ENCODE measurements at regions of chr16 and their contacts with region 1.

Region 1: DNA sequence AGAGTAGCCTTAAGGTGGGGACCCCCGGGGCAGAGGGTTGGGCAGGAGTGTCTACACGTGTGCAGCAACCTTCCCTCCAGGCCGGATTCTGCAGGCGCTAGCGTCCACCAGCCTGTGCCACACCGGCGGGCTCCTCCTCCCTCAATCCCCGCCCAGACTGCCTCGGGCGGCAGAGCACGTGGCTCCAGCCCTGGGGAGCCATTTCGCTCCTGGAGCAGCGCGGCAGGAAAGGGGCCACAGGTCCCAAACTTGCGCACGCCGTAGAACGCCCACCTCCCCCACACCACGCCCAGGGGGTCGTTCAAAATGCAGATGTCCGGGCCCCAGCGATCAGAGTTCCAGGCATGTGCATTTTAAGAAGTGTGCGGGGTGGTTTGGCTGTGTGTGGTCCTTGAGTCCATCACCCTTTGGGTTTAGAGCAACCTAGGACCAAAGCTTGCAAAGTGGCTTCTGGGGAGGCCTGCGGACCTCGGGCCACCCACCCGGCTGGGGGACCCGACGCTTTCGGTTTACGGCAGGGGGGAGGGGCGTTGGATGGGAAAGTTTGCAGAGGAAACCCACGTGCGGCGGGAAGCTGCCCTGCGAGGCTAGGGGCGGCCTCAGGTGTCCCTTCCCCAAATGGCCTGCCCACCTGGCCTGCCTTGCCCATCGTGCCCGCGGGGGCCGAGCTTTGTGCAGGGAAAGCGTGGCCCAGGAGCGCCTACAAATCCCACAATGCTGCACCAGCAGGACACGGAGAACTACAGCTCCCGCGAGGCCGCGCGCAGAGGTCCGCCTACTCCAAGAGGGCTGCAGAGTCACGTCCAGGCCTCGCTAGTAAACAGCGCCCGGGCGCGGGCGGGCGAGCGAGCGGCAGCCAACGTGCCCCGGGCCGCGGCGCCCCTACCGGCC is 1.4 kb downstream of the TFAP4 start:
- DNase-seq: peak; percentile 96
- ATAC-seq: peak; percentile 85
- H3K4me3 Mint-ChIP-seq: peak overlapping the region; percentile 84
- H3K27ac Mint-ChIP-seq: peak overlapping the region; percentile 94
- H3K4me1 Mint-ChIP-seq: peaks cover 12% of the 10 kb centered on the region
- H3K27me3 Mint-ChIP-seq: no peaks in the 10 kb centered on the region

Region 2: GRCh38 chr16:3717235-3718018 is 554.0 kb before region 1 on chr16 and contains the start of gene TRAP1:
- CTCF ChIA-PET with region 1: no interaction called
- POLR2A ChIA-PET with region 1: no interaction called
- intact Hi-C with region 1: loop called in 1 of 2 experiments (anchors 1 kb)
- DNase-seq: peak; percentile 95
- ATAC-seq: peak; percentile 95
- H3K4me3 Mint-ChIP-seq: peak within 1 kb of the TSS; percentile 89
- H3K27ac Mint-ChIP-seq: peak within 1 kb of the TSS; percentile 92
- H3K4me1 Mint-ChIP-seq: peaks cover 44% of the 10 kb centered on the region
- H3K27me3 Mint-ChIP-seq: no peaks in the 10 kb centered on the region
- total RNA-seq, gene TRAP1: 306 to 360 TPM

Region 3: DNA sequence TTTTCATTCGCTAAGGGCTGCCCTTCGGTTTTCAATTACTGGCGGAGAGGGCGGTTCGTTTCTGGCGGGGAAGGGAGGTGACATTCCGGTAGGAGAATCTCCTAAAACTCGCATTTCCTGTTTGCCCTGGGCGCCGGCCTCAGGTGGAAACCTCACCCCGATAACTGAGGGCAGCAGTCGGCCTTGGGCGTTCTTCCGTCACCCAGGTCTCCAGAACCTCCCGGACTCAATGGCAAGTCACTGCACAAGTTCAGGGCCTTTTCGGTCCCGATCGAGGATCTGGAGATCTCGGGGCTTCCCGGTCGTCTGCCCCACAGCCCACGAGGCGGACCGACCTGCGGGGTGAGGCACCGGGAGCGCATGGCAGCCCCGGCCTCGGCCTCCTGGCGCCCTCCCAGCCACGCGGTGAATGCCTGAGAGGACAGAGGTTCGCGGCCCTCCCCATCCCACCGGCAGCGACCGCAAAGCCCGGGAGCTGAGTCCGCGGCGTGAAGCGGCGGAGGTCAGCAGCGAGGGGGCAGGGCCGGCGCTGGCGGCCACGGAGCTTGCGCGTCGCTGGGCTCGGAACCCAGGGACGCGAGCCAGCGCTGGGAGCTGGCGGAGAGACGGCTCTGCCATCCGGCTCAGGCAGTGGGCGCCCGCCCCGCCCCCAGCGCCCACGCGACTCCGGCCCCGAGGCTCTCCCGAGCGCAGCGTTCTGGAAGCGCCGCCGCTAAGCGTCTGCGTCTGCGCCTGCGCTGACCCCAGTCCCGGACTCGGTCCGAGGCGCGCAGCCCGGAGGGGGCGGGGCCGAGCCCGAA is 88.0 kb before region 1 on chr16:
- CTCF ChIA-PET with region 1: no interaction called
- POLR2A ChIA-PET with region 1: no interaction called
- intact Hi-C with region 1: loop called in 1 of 2 experiments (anchors 1 kb)
- DNase-seq: peak; percentile 94
- ATAC-seq: peak; percentile 95
- H3K4me3 Mint-ChIP-seq: peak overlapping the region; percentile 76
- H3K27ac Mint-ChIP-seq: peak overlapping the region; percentile 47
- H3K4me1 Mint-ChIP-seq: peaks cover 6% of the 10 kb centered on the region
- H3K27me3 Mint-ChIP-seq: no peaks in the 10 kb centered on the region

Region 4: GRCh38 chr16:4244254-4245076 is 27.0 kb before region 1 on chr16:
- CTCF ChIA-PET with region 1: no interaction called
- POLR2A ChIA-PET with region 1: no interaction called
- intact Hi-C with region 1: no loop called
- DNase-seq: no peak
- ATAC-seq: no peak
- H3K4me3 Mint-ChIP-seq: no peak overlapping the region
- H3K27ac Mint-ChIP-seq: no peak overlapping the region
- H3K4me1 Mint-ChIP-seq: no peaks in the 10 kb centered on the region
- H3K27me3 Mint-ChIP-seq: no peaks in the 10 kb centered on the region

Region 5: GRCh38 chr16:4350787-4351659 is 79.6 kb after region 1 on chr16 and contains the start of gene PAM16:
- CTCF ChIA-PET with region 1: interaction called, 3 read pairs
- POLR2A ChIA-PET with region 1: interaction called, 4 read pairs
- intact Hi-C with region 1: loop called (anchors 1 kb)
- DNase-seq: peak; percentile 99
- ATAC-seq: peak; percentile 96
- H3K4me3 Mint-ChIP-seq: peak within 1 kb of the TSS; percentile 89
- H3K27ac Mint-ChIP-seq: peak within 1 kb of the TSS; percentile 88
- H3K4me1 Mint-ChIP-seq: peaks cover 20% of the 10 kb centered on the region
- H3K27me3 Mint-ChIP-seq: no peaks in the 10 kb centered on the region
- total RNA-seq, gene PAM16: 62.8 to 67.8 TPM

Region 6: DNA sequence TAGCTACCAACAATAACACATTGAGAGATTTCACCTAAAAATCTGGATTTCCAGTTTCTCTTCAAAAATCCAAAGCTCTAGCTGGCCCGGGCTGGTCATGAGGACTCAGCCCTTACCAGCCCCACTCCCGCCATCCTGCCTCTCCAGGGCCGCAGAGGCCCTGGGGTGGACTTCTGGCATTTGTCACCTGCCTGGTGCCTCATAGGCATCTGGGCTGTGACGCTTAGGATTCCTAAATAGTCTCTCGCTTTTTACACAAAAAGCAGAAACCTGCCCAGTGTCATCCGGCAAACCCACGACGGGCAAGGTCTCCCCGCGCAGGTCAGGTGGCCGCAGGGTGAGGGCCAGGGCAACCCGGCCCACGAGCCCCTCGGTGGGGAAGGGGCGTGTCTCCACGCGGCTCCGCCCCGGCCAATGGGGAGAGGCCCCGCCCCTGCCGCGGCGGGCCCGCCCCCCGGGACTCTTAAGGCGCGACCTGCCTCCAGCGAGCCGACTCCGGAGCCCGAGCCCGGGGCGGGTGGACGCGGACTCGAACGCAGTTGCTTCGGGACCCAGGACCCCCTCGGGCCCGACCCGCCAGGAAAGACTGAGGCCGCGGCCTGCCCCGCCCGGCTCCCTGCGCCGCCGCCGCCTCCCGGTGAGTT is 100.1 kb after region 1 on chr16 and contains the start of gene VASN:
- CTCF ChIA-PET with region 1: no interaction called
- POLR2A ChIA-PET with region 1: no interaction called
- intact Hi-C with region 1: no loop called
- DNase-seq: peak; percentile 81
- ATAC-seq: peak; percentile 94
- H3K4me3 Mint-ChIP-seq: peak within 1 kb of the TSS; percentile 59
- H3K27ac Mint-ChIP-seq: no peak within 1 kb of the TSS
- H3K4me1 Mint-ChIP-seq: peaks cover 12% of the 10 kb centered on the region
- H3K27me3 Mint-ChIP-seq: no peaks in the 10 kb centered on the region
- total RNA-seq, gene VASN: not detected

Region 7: DNA sequence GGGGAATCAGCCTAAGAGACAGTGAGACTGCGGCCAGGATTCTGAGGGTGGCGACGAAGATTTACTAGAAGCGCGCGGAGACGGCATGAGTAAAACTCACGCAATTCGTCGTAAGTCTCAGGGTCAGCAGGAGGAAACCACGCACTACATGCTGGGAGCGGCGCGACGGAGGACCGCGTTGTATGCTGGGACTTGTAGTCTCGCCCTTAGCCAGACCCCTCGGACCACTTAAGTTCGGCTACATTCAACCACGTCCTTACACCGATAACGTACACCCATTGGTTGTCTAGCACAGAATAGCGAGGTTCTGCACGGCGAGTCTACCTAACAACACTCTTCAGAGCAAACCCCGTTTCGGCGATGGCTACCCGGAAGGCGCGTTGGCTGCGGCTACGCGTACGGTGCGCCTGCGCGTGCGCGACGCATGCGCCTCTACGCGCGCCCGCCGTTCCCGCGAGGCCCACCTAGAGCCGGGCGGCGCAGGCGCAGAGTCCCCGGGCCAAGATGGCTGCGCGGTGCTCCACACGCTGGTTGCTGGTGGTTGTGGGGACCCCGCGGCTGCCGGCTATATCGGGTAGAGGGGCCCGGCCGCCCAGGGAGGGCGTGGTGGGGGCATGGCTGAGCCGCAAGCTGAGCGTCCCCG is 154.1 kb after region 1 on chr16 and contains the start of gene DNAJA3:
- CTCF ChIA-PET with region 1: no interaction called
- POLR2A ChIA-PET with region 1: no interaction called
- intact Hi-C with region 1: loop called in 1 of 2 experiments (anchors 1 kb)
- DNase-seq: peak; percentile 96
- ATAC-seq: peak; percentile 93
- H3K4me3 Mint-ChIP-seq: peak within 1 kb of the TSS; percentile 95
- H3K27ac Mint-ChIP-seq: peak within 1 kb of the TSS; percentile 98
- H3K4me1 Mint-ChIP-seq: peaks cover 27% of the 10 kb centered on the region
- H3K27me3 Mint-ChIP-seq: no peaks in the 10 kb centered on the region
- total RNA-seq, gene DNAJA3: 93.9 to 102 TPM

Region 8: DNA sequence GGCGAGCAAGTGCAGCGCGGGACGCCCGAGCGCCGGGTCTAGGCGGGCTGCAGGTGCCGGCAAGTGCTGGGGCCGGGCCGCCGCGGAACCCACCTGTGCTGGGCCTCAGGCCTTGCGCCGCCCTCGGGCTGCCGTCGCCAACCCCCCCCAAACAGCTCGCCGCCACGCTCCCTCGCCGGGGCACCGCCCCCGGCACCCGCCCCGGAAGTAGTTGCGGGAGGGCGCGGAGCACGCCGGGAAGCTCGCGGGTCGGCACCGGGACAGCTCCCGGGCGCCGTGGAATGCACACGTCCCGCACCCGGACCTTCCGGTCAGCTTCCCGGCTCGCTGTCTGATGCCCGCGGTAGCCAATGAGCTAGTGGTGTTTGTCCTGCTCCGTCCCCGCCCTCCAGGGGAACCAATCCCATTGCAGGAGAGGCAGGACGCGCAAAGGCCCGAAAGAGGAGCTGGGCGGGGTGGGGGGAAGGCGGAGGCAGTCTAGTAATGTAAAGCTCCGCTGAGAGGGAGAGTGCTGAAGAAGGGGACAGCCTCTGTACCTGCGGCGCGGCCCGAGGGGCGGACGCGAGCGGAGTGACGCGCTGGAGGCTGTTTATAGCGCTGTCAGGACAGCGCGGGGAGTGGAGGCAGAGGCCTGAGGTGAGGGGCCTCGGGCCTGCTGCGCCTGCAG is 462.8 kb after region 1 on chr16 and contains the starts of genes ANKS3 and DNAAF8:
- CTCF ChIA-PET with region 1: no interaction called
- POLR2A ChIA-PET with region 1: no interaction called
- intact Hi-C with region 1: loop called in 1 of 2 experiments (anchors 1 kb)
- DNase-seq: peak; percentile 88
- ATAC-seq: peak; percentile 82
- H3K4me3 Mint-ChIP-seq: peak within 1 kb of the TSS; percentile 86
- H3K27ac Mint-ChIP-seq: peak within 1 kb of the TSS; percentile 58
- H3K4me1 Mint-ChIP-seq: peaks cover 13% of the 10 kb centered on the region
- H3K27me3 Mint-ChIP-seq: no peaks in the 10 kb centered on the region
- total RNA-seq, gene ANKS3: 12.1 to 14.1 TPM
- total RNA-seq, gene DNAAF8: 0.11 to 0.16 TPM

Measured in activated CD4-positive, alpha-beta T cell treated with anti-CD3 and anti-CD28 coated beads for 36 hours (primary cell).